ENCODE measurements at regions of chr1 and their contacts with region 1.

Region 1: DNA sequence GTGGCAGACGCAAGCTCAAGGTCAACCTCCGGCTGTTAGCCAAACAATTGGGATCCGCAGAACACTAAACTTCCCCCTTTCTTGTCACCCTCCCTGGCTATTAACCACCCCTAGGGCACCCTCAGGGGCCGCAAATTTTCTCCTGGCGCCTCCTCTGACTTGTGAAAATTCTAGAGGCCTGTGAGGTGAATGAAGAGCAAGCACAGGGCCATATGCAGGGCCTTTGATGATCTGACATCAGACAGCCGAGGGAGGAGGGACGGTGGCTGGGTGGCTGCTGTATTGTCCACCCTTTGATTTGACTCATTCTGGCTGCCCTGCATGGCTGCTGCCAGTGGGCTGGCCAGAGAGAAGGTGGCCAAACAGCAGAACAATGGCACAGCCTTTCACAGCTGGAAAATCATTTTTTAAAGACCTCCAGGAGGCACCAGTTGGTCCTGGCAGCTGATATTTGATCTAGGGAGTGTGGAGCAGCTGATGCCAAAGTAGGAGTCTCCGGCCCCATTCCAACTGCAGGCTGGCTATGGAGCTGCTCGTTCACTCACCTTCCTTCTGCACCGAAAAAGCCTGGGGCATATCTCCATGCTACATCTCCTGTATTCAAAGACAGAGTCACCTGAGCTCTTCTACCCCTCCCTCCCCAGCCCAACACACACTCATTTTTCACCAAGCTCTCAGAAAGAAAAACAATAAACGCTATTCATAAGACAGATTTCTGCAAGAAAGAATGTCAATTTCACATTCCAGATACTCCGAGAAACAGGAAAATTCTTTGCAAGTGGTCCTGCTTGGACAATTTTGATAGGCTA is 44.9 kb upstream of the BARHL2 start:
- DNase-seq: peak in 1 of 10 donors; percentile 45
- H3K4me3 ChIP-seq: no peak overlapping the region
- H3K27ac ChIP-seq: no peak overlapping the region
- H3K27me3 ChIP-seq: peaks cover 0 to 22% (median 0%) of the 10 kb centered on the region in 45 donors
- CTCF ChIP-seq: no peak

Region 2: GRCh38 chr1:90746857-90747256 is 15.1 kb before region 1 on chr1:
- intact Hi-C with region 1: loop called in 1 of 2 experiments (anchors 2 kb)
- DNase-seq: no peak
- H3K4me3 ChIP-seq: no peak overlapping the region
- H3K27ac ChIP-seq: no peak overlapping the region
- H3K27me3 ChIP-seq: peaks cover 0 to 11% (median 0%) of the 10 kb centered on the region in 45 donors
- CTCF ChIP-seq: no peak